Caco-2 (cell line): ENCODE measurements at regions of chr2 and their contacts with region 1.

Region 1: DNA sequence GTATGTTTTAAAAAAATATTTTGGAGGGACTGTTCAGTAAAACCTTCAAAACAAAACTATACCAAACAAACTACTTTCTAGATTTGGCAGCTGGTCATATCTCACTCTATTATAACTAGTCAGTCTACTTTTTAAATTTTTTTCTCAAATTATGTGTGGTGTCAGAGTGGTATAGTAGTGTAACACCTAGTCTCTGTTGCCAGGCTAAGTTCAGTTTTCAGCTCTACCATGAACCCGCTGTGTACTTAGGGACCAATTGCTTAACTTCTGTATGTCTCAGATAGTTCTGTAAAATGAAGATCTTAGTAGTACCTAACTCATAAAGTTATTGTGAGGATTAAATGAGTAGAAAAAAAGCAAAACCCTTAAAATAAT is 54.3 kb downstream of the GPD2 start:
- DNase-seq: no peak
- H3K4me3 ChIP-seq: no peak overlapping the region
- H3K4me3 Mint-ChIP-seq: no peak overlapping the region
- H3K27ac Mint-ChIP-seq: no peak overlapping the region
- H3K4me1 ChIP-seq: peaks cover 6% of the 10 kb centered on the region; the same call in 1 of the 2 replicates
- H3K4me1 Mint-ChIP-seq: peaks cover 11% of the 10 kb centered on the region
- H3K27me3 ChIP-seq: no peaks in the 10 kb centered on the region
- H3K27me3 Mint-ChIP-seq: no peaks in the 10 kb centered on the region
- CTCF ChIP-seq: no peak

Region 2: DNA sequence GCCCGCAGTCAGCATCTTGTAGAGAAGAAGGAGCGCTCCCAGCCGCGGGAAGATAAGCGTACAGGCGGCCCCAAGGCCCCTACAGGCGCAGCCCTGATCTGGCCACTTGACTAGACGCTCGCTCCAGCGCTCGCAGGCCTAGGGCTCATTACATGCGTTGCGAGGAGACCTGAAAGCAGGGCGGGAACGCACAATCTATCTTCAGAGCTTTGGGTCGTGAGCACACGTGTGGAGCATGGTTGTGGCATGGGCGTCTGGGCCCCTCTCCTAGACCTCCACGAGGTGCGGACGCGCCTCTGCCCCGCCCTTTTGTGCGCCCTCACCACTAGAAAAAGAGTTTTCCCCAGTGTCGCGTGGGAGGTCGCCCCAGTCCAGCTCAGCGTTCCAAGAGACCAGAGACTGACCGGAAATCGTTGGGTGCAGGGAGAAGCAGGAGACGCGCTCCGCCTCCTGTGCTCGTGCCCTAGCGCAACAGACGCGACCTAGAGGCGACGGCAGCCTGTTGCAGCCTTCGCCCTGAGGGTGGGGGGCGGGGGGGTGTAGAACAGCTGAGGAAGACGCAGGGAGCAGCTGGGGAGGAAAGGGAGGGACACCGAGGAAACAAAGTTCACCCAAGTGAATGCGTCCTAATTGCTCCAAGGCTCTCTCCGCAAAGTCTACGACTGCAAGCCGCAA is 170.5 kb before region 1 on chr2:
- CTCF ChIA-PET with region 1: interaction called, 11 read pairs
- POLR2A ChIA-PET with region 1: no interaction called
- intact Hi-C with region 1: no loop called
- DNase-seq: no peak
- H3K4me3 ChIP-seq: no peak overlapping the region
- H3K4me3 Mint-ChIP-seq: peak overlapping the region; percentile 0
- H3K27ac Mint-ChIP-seq: no peak overlapping the region
- H3K4me1 ChIP-seq: no peaks in the 10 kb centered on the region
- H3K4me1 Mint-ChIP-seq: no peaks in the 10 kb centered on the region
- H3K27me3 ChIP-seq: no peaks in the 10 kb centered on the region
- H3K27me3 Mint-ChIP-seq: peaks cover 3% of the 10 kb centered on the region
- CTCF ChIP-seq: no peak

Region 3: DNA sequence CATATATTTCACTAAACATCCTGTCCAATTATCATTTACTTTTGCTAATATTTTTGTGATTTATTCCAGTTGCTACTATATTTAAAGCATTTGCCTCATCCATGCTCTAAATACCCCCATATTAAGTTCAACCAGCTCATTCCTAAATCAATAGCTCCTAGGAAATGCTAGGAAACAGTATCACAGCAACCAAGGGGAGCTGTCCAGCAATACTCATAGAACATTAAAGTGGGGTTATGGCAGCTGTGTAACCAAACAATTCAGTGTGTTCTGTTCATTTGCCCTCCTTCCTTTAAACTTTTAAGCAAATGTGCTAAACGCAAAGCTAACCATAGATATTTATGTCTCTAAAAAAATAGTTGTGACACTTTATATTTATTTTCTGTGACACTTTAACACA is 1097.1 kb after region 1 on chr2:
- CTCF ChIA-PET with region 1: no interaction called
- POLR2A ChIA-PET with region 1: no interaction called
- intact Hi-C with region 1: loop called (anchors 5 kb)
- DNase-seq: no peak
- H3K4me3 ChIP-seq: no peak overlapping the region
- H3K4me3 Mint-ChIP-seq: no peak overlapping the region
- H3K27ac Mint-ChIP-seq: no peak overlapping the region
- H3K4me1 ChIP-seq: no peaks in the 10 kb centered on the region
- H3K4me1 Mint-ChIP-seq: no peaks in the 10 kb centered on the region
- H3K27me3 ChIP-seq: no peaks in the 10 kb centered on the region
- H3K27me3 Mint-ChIP-seq: peaks cover 3% of the 10 kb centered on the region
- CTCF ChIP-seq: no peak